Motor neuron (in vitro differentiated cells): ENCODE measurements at regions of chr3 and their contacts with region 1.

Region 1: DNA sequence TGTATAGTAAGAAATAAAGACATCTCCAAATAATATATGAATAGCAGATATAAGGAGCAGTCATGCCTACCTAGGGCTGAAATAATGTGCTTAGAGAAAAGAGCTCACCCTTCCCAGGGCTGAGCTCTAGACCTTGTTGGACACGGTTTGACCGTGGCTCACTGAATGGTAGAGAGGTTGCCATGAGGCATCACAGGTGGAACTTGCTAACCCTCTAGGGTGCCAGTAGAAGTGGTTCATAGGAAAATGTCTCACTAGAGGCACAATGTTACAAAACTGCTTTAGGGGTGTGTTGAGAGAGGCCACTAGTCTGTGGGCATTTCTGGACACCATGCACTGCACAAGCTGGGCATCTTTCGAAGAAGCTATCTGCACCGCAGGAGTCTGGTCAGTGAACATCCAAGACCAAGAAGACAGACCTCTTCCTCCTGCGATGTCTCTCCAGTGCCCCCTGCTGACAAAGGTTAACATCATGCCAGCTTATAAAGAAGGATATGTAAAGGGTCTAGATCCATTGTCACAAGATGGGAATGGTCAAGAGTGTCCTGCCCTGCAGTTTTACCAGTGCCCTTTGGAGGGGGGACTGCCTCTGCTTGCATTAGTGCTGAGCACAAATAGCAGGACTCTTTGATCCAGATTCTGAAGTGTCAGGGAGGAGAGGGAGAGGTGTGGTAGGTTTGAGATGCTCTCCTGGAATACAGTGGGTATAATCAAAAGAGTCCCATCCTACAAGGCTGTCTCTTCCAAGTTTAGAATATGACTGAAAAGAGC is 266.8 kb downstream of the ZNF385D start:
- ATAC-seq: peak in 4 of 8 experiments; percentile 62 to 99 (median 84)
- H3K4me3 ChIP-seq: no peak overlapping the region
- H3K27ac ChIP-seq: no peak overlapping the region
- H3K4me1 ChIP-seq: no peaks in the 10 kb centered on the region

Region 2: DNA sequence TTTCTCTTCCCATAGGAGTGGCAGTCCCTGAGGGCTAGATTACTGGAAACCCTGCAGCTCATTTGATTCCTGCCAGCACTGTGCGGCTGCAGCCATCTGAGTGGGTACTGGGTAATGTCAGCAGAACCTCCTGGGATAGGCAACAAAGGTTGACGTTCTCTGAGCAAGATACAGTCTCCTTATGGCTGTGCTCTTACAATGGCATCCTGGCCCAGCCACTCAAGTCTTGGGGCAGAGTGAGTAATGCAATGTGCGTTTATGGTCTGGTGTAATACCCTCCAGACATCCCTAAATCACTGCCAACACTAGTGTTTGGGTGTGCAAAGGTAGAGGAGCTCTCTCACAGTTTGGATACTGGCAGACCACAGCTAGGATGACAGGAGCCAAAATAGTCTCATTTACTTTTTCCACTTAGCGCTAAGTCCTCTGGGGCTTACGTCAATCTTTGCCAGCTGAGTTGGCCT is 509.0 kb before region 1 on chr3:
- in situ Hi-C with region 1: loop called in 1 of 9 experiments (anchors 25 kb)
- ATAC-seq: peak in 3 of 8 experiments; percentile 20 to 83 (median 46)
- H3K4me3 ChIP-seq: no peak overlapping the region
- H3K27ac ChIP-seq: no peak overlapping the region
- H3K4me1 ChIP-seq: peaks cover 4 to 5% of the 10 kb centered on the region in 2 donors